Caco-2 (cell line): ENCODE measurements at regions of chr15 and their contacts with region 1.

Region 1: GRCh38 chr15:41258706-41259471 is 27.8 kb downstream of the CHP1 start:
- DNase-seq: peak in 1 of 2 experiments; percentile 28
- H3K4me3 ChIP-seq: no peak overlapping the region
- H3K4me3 Mint-ChIP-seq: peak overlapping the region; percentile 1
- H3K27ac Mint-ChIP-seq: peak overlapping the region; percentile 68
- H3K4me1 ChIP-seq: peaks cover 49% of the 10 kb centered on the region
- H3K4me1 Mint-ChIP-seq: peaks cover 21% of the 10 kb centered on the region
- H3K27me3 ChIP-seq: no peaks in the 10 kb centered on the region
- H3K27me3 Mint-ChIP-seq: no peaks in the 10 kb centered on the region
- CTCF ChIP-seq: no peak

Region 2: DNA sequence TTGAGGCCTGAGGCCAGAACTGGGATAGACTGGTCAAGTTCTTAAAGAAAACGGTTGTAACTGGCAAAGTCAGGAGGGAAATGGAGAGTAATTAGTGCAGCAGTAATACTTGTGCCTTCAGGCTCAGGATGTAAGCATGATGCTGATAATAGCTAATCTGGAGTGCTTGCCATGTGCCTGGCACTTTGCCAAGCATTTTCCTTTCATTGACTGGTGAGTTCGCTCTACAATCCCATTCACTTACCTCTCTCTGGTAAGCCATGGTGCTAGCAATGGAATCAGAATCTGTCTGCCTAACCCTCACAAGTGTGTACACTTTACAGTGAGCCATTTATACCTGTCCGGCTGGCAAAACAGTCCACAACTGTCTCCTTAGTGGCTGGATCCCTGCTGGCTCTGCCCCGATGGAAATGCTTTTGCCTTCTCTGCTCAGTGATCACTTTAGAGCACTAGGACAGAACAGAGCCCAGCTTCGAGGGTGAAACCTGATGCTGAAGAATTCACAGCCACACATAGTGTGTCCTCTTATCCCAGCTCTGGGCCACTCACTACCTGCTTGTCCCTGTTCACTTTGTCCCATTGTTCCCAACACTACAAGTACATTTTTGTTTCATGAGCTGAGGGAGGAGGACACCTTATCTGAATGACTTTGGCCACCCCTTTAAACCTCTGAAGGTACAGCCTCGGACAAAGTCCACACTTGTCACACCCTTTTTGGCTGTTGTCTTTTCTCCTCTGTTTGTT is 17.5 kb before region 1 on chr15:
- CTCF ChIA-PET with region 1: no interaction called
- POLR2A ChIA-PET with region 1: no interaction called
- intact Hi-C with region 1: loop called (anchors 1 kb)
- DNase-seq: peak; percentile 40 to 45
- H3K4me3 ChIP-seq: no peak overlapping the region
- H3K4me3 Mint-ChIP-seq: peak overlapping the region; percentile 40
- H3K27ac Mint-ChIP-seq: peak overlapping the region; percentile 42
- H3K4me1 ChIP-seq: peaks cover 20% of the 10 kb centered on the region
- H3K4me1 Mint-ChIP-seq: peaks cover 4% of the 10 kb centered on the region
- H3K27me3 ChIP-seq: no peaks in the 10 kb centered on the region
- H3K27me3 Mint-ChIP-seq: no peaks in the 10 kb centered on the region
- CTCF ChIP-seq: no peak